CD4-positive, alpha-beta T cell (primary cell): ENCODE measurements at regions of chr10 and their contacts with region 1.

Region 1: DNA sequence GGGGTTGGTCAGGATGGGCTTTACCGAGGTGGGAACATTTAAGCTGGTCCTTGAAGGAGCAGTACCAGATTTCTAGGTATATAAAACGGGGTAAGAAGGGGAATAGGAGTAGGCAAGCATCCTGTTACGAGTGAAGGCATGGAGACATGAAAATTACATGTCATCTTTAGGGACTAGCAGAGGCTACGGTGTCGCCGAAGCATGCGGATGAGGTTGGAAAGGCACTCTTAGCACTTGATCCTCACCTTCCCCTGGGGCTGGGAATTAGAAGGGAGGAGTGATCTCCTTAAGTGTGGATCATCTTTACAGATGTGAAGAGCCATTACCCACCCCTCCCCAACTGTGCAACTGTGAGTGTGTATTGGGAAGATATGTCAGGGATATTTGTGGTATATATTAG is 13.8 kb upstream of the ZRANB1 start:
- DNase-seq: no peak
- ATAC-seq: no peak
- H3K4me3 ChIP-seq: no peak overlapping the region
- H3K4me3 Mint-ChIP-seq: no peak overlapping the region
- H3K27ac ChIP-seq: no peak overlapping the region
- H3K27ac Mint-ChIP-seq: no peak overlapping the region
- H3K4me1 ChIP-seq: no peaks in the 10 kb centered on the region
- H3K4me1 Mint-ChIP-seq: peaks cover 43% of the 10 kb centered on the region
- H3K27me3 ChIP-seq: no peaks in the 10 kb centered on the region
- H3K27me3 Mint-ChIP-seq: no peaks in the 10 kb centered on the region
- CTCF ChIP-seq: no peak

Region 2: DNA sequence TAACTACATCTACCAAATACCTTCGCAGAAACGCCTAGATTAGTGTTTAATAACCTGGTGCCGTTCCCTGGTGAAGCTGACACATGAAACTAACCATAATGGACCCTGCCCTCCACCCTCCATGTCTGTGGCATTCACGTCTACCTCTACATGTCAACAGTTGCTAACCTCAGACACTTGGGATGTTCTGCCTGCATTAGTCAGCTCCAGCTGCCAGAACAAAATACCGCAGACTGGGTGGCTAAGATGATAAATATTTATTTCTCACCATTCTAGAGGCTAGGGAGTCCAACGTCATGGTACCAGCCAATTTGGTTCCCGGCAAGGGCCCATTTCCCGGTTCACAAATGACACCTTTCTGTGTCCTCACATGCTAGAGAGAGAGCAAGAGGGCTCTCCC is 716.2 kb before region 1 on chr10:
- CTCF ChIA-PET with region 1: no interaction called
- POLR2A ChIA-PET with region 1: no interaction called
- intact Hi-C with region 1: no loop called
- DNase-seq: no peak
- ATAC-seq: no peak
- H3K4me3 ChIP-seq: no peak overlapping the region
- H3K4me3 Mint-ChIP-seq: no peak overlapping the region
- H3K27ac ChIP-seq: no peak overlapping the region
- H3K27ac Mint-ChIP-seq: no peak overlapping the region
- H3K4me1 ChIP-seq: no peaks in the 10 kb centered on the region
- H3K4me1 Mint-ChIP-seq: no peaks in the 10 kb centered on the region
- H3K27me3 ChIP-seq: no peaks in the 10 kb centered on the region
- H3K27me3 Mint-ChIP-seq: no peaks in the 10 kb centered on the region
- CTCF ChIP-seq: no peak

Region 3: GRCh38 chr10:124983255-124983705 is 55.2 kb after region 1 on chr10:
- CTCF ChIA-PET with region 1: no interaction called
- POLR2A ChIA-PET with region 1: no interaction called
- intact Hi-C with region 1: loop called in 1 of 2 experiments (anchors 5 kb)
- DNase-seq: no peak
- ATAC-seq: no peak
- H3K4me3 ChIP-seq: no peak overlapping the region
- H3K4me3 Mint-ChIP-seq: no peak overlapping the region
- H3K27ac ChIP-seq: no peak overlapping the region
- H3K27ac Mint-ChIP-seq: peak overlapping the region; percentile 37
- H3K4me1 ChIP-seq: no peaks in the 10 kb centered on the region
- H3K4me1 Mint-ChIP-seq: no peaks in the 10 kb centered on the region
- H3K27me3 ChIP-seq: no peaks in the 10 kb centered on the region
- H3K27me3 Mint-ChIP-seq: no peaks in the 10 kb centered on the region
- CTCF ChIP-seq: no peak

Region 4: DNA sequence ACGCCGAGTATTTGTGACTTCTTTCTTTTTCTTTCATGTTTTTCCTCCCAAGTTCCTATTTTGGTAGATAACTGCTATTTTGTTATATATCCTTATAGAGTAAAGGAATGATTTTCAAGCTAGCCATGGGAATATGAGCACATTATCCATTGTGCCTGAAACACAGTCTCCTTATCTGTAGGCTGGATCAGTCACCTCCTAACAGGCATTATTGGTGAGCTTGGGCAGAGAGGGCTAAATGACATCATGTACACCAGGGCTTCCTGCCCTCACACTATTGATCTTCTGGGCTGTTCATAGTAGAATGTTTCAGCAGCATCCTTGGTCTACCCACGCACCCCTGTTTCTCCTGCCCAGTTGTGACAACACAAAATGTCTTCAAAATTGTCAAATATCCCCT is 320.4 kb after region 1 on chr10:
- CTCF ChIA-PET with region 1: no interaction called
- POLR2A ChIA-PET with region 1: no interaction called
- intact Hi-C with region 1: no loop called
- DNase-seq: no peak
- ATAC-seq: no peak
- H3K4me3 ChIP-seq: no peak overlapping the region
- H3K4me3 Mint-ChIP-seq: no peak overlapping the region
- H3K27ac ChIP-seq: no peak overlapping the region
- H3K27ac Mint-ChIP-seq: no peak overlapping the region
- H3K4me1 ChIP-seq: no peaks in the 10 kb centered on the region
- H3K4me1 Mint-ChIP-seq: no peaks in the 10 kb centered on the region
- H3K27me3 ChIP-seq: no peaks in the 10 kb centered on the region
- H3K27me3 Mint-ChIP-seq: no peaks in the 10 kb centered on the region
- CTCF ChIP-seq: no peak